ENCODE measurements at regions of chr10 and their contacts with region 1.

Region 1: DNA sequence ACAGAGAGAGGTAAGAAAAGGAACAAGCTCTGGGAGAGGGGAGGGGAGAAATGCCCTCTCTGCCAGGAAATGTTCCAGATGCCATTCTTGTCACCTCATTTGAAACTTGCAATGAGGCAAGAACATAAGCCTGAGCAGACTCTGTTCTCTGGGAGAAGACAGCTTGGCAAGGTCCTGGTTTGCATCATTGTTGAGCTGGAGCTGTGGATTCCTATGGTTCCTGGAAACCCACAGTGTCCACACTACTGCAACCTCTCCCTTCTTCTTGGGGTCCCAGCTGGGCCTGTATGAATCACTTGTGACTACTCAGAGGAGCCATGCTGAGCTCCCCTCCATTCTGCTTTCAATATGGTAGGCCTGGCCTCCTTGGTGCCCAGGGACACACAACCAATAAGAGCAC is 60.8 kb upstream of the HECTD2 start:
- DNase-seq: peak; percentile 54 to 94
- H3K4me3 ChIP-seq: no peak overlapping the region
- H3K27ac ChIP-seq: peak overlapping the region; percentile 88 to 90
- H3K4me1 ChIP-seq: peaks cover 14 to 29% of the 10 kb centered on the region in 2 donors
- H3K27me3 ChIP-seq: no peaks in the 10 kb centered on the region
- CTCF ChIP-seq: no peak

Region 2: GRCh38 chr10:91271886-91272285 is 77.5 kb before region 1 on chr10:
- intact Hi-C with region 1: no loop called
- DNase-seq: no peak
- H3K4me3 ChIP-seq: no peak overlapping the region
- H3K27ac ChIP-seq: no peak overlapping the region
- H3K4me1 ChIP-seq: no peaks in the 10 kb centered on the region
- H3K27me3 ChIP-seq: no peaks in the 10 kb centered on the region
- CTCF ChIP-seq: no peak

Region 3: DNA sequence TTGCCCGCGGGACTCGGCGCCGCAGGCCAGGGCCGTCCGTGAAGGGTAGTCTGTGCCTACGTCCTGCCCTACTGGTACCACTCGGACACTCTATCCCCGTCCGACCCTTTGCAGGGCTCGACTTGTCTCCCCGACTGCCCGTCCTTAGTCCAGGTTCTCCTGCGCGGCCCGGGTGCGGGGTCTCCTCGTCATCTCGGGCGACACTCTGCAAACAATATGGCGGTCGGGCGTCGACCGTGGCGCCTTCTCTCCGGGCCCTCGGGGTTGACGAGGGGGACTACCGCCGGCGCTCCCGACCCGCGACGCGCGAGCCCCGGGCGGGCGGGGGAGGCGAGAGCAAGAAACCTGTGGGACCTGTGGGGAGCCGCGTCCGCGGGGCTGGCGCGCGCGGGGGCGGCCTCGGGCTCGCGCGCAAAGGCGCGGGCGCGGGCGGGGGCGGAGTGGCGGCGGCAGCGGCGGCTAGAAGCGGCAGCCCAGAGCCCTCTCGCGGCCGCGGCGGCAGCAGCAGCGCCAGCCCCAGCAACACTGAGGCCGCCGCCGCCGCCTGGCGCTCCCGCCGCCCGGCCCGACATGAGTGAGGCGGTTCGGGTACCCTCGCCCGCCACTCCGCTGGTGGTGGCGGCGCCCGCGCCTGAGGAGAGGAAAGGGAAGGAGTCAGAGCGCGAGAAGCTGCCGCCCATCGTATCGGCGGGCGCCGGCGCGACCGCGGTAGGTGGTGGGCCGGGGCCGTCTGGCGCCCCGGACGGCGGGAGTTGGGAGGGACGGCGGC is 60.7 kb after region 1 on chr10 and contains the start of gene HECTD2:
- intact Hi-C with region 1: loop called (anchors 2 kb)
- DNase-seq: peak in 1 of 2 donors; percentile 85
- H3K4me3 ChIP-seq: peak within 1 kb of the TSS; percentile 90 to 95
- H3K27ac ChIP-seq: peak within 1 kb of the TSS; percentile 99 to 100
- H3K4me1 ChIP-seq: peaks cover 2 to 7% of the 10 kb centered on the region in 2 donors
- H3K27me3 ChIP-seq: no peaks in the 10 kb centered on the region
- CTCF ChIP-seq: peak in 2 of 3 experiments; percentile 36 to 76
- total RNA-seq, gene HECTD2: 25.4 TPM

Region 4: DNA sequence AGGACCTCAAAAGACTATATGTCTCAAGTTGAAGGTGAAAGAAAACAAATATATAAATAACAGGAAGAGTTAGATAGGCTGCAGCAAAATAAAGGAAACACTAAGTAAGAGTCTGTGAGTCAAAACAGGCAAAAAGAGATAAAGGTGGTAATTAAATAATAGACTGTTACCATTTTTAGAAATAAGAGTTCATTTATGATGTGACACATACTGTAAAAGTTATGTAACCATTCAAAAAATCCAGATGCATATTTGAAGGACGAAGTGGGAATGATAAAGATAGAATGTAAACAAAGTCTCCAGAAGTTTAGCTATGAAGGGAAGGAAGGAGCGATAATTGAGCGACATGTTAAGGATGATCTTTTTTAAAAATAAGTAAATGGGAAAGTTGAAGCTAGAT is 111.3 kb after region 1 on chr10:
- intact Hi-C with region 1: no loop called
- DNase-seq: no peak
- H3K4me3 ChIP-seq: no peak overlapping the region
- H3K27ac ChIP-seq: no peak overlapping the region
- H3K4me1 ChIP-seq: no peaks in the 10 kb centered on the region
- H3K27me3 ChIP-seq: no peaks in the 10 kb centered on the region
- CTCF ChIP-seq: no peak

Region 5: GRCh38 chr10:92839191-92840085 is 1490.1 kb after region 1 on chr10:
- intact Hi-C with region 1: no loop called
- DNase-seq: peak in 1 of 2 donors; percentile 68
- H3K4me3 ChIP-seq: no peak overlapping the region
- H3K27ac ChIP-seq: no peak overlapping the region
- H3K4me1 ChIP-seq: no peaks in the 10 kb centered on the region
- H3K27me3 ChIP-seq: no peaks in the 10 kb centered on the region
- CTCF ChIP-seq: no peak